ENCODE measurements at regions of chr22 and their contacts with region 1.

Region 1: GRCh38 chr22:42258126-42258525 is 12.3 kb downstream of the TCF20 start:
- DNase-seq: no peak
- H3K4me3 ChIP-seq: no peak overlapping the region
- H3K4me3 Mint-ChIP-seq: peak overlapping the region in 3 of 8 donors; percentile 13 to 53 (median 18)
- H3K27ac ChIP-seq: no peak overlapping the region
- H3K27ac Mint-ChIP-seq: peak overlapping the region in 2 of 7 donors; percentile 5 to 70
- H3K4me1 ChIP-seq: peaks cover 80% of the 10 kb centered on the region
- H3K4me1 Mint-ChIP-seq: peaks cover 67 to 88% (median 78%) of the 10 kb centered on the region in 4 donors
- H3K27me3 ChIP-seq: no peaks in the 10 kb centered on the region
- H3K27me3 Mint-ChIP-seq: no peaks in the 10 kb centered on the region

Region 2: DNA sequence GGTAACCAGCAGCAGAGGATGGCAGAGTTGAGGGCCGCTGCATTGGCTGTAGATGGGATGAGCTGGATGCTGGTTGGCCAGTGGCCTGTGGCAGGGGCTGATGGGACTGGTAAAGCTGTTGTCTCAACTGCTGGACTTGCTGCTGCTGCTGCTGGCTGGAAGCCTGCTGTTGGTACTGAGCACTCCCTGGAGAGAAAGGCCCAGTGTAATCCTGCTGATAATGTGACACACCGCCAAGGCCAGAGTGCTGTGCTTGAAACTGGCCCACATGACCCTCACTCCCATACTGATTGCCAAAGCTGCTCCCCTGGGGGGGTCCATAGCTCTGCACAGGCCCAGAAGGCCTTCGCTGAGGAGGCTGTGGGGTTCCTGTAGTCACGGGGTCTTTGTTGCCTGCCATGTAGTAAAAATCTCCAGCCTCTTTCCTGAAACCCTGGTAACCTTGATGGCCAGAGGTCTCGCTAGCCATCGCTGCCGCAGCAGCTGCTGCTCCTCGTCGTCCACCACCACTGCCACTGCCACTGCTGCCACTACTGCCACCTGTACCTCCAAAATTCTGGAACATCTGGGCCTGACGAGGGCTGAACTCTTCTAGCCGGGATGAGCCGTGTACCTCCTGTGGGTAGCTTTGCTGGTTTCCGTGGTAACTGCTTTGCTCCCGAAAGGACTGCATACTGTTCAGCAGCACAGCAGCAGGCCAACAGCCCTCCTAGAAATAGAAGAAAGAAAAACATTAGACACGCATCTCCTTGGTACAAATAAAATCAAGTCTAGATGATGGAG is 43.3 kb before region 1 on chr22:
- CTCF ChIA-PET with region 1: no interaction called
- POLR2A ChIA-PET with region 1: no interaction called
- intact Hi-C with region 1: loop called (anchors 5 kb)
- DNase-seq: no peak
- H3K4me3 ChIP-seq: no peak overlapping the region
- H3K4me3 Mint-ChIP-seq: no peak overlapping the region
- H3K27ac ChIP-seq: no peak overlapping the region
- H3K27ac Mint-ChIP-seq: peak overlapping the region in 6 of 7 donors; percentile 13 to 74 (median 50)
- H3K4me1 ChIP-seq: peaks cover 44% of the 10 kb centered on the region
- H3K4me1 Mint-ChIP-seq: peaks cover 40 to 65% (median 49%) of the 10 kb centered on the region in 4 donors
- H3K27me3 ChIP-seq: no peaks in the 10 kb centered on the region
- H3K27me3 Mint-ChIP-seq: no peaks in the 10 kb centered on the region

Region 3: DNA sequence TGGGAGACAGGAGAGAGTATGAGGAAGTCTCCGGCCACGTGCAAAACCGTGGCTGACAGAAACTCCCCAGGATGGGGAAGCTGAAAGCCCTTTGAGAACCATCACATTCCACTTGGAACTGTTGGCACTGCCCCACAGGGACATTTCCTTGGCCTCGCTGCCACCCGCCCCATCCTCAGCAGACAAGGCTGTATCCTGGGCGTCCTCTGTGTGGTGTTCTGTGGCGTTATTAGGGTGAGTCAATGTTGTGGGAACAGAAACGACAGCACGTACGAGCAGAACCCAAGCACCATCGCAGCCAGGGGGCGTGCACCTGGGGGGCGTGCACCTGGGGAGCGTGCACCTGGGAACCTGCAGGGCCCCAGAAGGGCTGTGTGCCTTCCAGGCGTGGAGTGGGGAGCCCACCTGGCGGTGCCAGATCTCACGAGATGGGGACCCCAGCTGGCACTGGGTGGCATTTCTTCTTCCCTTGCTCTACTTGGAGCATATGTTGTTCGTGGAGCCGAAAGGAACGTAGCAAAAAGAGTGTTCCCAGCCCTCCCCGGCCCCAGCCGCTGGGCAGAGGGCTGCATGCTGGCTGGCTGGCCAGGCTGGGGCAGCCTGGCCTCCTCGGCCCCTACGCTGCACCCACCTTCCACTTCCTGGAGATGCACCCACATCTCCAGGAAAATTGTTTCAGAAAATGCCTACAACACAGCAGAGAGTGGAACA is 138.7 kb after region 1 on chr22:
- CTCF ChIA-PET with region 1: no interaction called
- POLR2A ChIA-PET with region 1: no interaction called
- intact Hi-C with region 1: no loop called
- DNase-seq: no peak
- H3K4me3 ChIP-seq: no peak overlapping the region
- H3K4me3 Mint-ChIP-seq: peak overlapping the region in 3 of 8 donors; percentile 14 to 51 (median 46)
- H3K27ac ChIP-seq: no peak overlapping the region
- H3K27ac Mint-ChIP-seq: peak overlapping the region in 1 of 7 donors; percentile 15
- H3K4me1 ChIP-seq: peaks cover 8% of the 10 kb centered on the region
- H3K4me1 Mint-ChIP-seq: peaks cover 8 to 19% (median 10%) of the 10 kb centered on the region in 4 donors
- H3K27me3 ChIP-seq: no peaks in the 10 kb centered on the region
- H3K27me3 Mint-ChIP-seq: peaks cover 0 to 3% of the 10 kb centered on the region in 2 donors

Measured in CD4-positive, alpha-beta memory T cell (primary cell).